HEK293T (cell line): ENCODE measurements at regions of chr22 and their contacts with region 1.

Region 1: GRCh38 chr22:42369245-42370041 is 62.8 kb downstream of the NFAM1 start:
- DNase-seq: peak; percentile 96

Region 2: GRCh38 chr22:42270512-42271417 is 98.7 kb before region 1 on chr22 and contains the start of gene TCF20:
- CTCF ChIA-PET with region 1: no interaction called
- POLR2A ChIA-PET with region 1: no interaction called
- DNase-seq: peak; percentile 88

Region 3: DNA sequence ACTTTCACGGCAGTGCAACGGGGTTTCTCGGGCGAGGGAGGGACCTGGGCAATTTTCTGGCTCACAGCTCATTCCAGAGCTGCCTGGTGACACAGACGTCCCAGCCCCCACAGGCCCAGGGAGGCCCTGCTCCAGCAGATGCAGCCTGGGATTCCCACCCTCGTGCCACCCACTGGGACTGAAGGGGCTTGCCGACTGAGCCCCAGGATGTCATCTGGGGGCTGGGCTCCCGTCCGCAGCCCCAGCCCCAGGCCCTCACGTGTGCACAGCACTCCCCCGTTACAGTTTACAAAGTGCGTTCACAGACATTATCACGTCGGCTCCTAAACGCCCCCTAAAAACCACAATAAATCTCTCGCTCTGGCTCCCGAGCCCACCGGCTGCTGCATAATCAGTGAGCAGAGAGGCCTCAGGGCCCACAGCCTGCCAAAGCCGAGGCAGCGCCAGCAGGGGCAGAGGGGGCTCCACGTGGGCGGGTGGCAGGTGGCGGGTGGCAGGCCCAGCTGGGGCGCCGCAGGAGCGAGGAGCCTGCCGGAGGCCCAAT is 22.1 kb before region 1 on chr22:
- CTCF ChIA-PET with region 1: no interaction called
- POLR2A ChIA-PET with region 1: interaction called, 12 read pairs
- DNase-seq: no peak

Region 4: DNA sequence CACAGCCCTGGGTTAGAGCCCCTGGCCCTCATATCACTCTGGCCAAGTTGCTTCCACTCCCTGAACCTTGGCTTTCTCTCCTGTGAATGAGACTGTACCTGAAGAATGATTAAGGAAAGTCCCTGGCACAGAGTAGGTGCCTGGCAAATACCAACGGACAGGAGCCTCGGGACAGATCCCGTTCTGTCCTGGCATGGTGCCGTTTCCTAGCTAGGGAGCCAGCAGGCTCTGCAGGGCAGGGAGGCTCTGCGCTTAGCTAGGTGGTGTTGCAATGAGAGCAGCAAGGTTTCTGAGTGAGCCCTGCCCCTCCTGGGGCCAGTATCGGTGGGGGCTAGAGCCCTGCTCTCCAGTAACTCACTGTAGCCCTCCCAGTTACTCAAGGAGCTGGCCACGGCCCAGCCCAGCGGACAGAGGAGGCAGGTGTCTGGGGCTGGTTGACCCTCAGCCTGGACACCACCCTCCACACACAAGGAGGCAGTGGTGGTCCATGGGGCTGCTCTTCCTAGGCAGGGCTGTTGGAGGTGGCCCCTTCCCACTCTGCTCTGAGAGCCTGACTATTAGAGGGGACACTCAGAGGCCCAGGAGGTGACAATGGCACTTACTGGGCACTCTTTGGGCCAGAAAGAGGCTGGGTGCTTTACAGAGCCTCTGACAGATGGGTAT is 11.7 kb before region 1 on chr22:
- CTCF ChIA-PET with region 1: interaction called, 5 read pairs
- POLR2A ChIA-PET with region 1: interaction called, 20 read pairs
- DNase-seq: no peak

Region 5: DNA sequence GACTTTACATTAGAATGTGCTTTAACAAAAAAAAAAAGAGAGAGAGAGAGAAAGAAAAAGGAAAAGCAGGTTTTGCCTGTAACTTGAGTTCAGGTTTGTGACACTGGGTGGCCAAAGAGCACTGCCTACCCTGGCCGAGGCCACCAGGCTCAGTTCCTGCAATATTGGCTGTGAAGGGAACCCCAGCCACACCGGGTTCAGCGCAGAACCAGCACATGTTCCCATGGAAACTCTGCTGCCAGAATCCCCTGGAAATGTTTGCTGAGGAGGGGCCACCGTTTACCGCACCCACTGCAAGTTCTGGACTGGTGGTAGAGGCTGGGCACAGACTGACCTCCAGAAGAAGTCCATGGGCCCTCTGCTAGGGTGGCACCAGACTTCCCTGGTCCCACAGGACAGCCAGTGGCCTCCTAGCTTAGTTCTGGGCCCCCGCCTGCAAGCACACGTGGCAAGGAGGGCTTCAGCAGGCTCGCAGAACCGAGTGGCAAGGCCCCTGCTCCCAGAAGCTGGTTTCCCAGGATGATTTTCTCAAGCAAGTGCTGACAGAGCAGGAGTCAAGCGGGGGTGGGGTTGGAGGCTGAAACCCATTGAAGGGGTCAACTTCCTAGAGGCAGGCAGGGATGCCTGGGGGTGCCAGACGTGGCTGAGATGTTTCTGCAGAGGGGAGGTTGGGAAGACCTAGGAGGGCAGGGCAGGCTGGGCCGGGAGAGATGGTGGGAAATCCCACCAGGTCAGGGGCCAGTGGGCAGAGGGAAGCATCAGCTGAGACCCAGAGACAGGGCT is 11.5 kb after region 1 on chr22:
- CTCF ChIA-PET with region 1: no interaction called
- POLR2A ChIA-PET with region 1: interaction called, 12 read pairs
- DNase-seq: no peak

Region 6: GRCh38 chr22:42473484-42474193 is 104.2 kb after region 1 on chr22:
- CTCF ChIA-PET with region 1: no interaction called
- POLR2A ChIA-PET with region 1: no interaction called
- DNase-seq: peak; percentile 61